Caco-2 (cell line): ENCODE measurements at regions of chr20 and their contacts with region 1.

Region 1: DNA sequence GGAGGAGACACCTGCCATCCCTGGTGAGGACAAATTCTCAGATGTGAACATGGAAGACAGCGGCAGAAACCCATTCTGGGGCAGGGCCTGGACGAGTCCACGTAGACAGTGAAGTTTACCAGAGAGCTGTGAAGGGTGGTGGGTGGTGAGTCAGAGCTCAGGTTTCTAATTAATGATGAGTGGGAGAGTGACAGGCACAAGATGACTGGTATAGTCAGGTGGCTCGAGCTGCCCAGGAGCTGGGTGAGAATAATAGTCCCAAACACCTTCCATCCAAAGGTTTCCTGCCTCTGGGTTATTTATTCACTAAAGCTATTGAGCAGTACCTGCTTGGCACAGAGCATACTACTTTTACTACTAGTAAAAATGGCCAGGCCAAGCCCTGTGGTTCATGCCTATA is 6.0 kb downstream of the TLDC2 start:
- DNase-seq: no peak
- H3K4me3 ChIP-seq: no peak overlapping the region
- H3K4me3 Mint-ChIP-seq: no peak overlapping the region
- H3K27ac Mint-ChIP-seq: no peak overlapping the region
- H3K4me1 ChIP-seq: peaks cover 2% of the 10 kb centered on the region; the same call in 1 of the 2 replicates
- H3K4me1 Mint-ChIP-seq: peaks cover 10% of the 10 kb centered on the region
- H3K27me3 ChIP-seq: no peaks in the 10 kb centered on the region
- H3K27me3 Mint-ChIP-seq: no peaks in the 10 kb centered on the region
- CTCF ChIP-seq: no peak

Region 2: GRCh38 chr20:36792422-36792821 is 89.5 kb before region 1 on chr20:
- CTCF ChIA-PET with region 1: interaction called, 14 read pairs
- POLR2A ChIA-PET with region 1: no interaction called
- intact Hi-C with region 1: loop called (anchors 1 kb)
- DNase-seq: peak; percentile 94 to 95
- H3K4me3 ChIP-seq: no peak overlapping the region
- H3K4me3 Mint-ChIP-seq: no peak overlapping the region
- H3K27ac Mint-ChIP-seq: no peak overlapping the region
- H3K4me1 ChIP-seq: no peaks in the 10 kb centered on the region
- H3K4me1 Mint-ChIP-seq: no peaks in the 10 kb centered on the region
- H3K27me3 ChIP-seq: no peaks in the 10 kb centered on the region
- H3K27me3 Mint-ChIP-seq: no peaks in the 10 kb centered on the region
- CTCF ChIP-seq: peak; percentile 67 to 92